Tibial artery (tissue), 4 donors: ENCODE measurements at regions of chr2 and their contacts with region 1.

Region 1: GRCh38 chr2:20188851-20189250 is 36.1 kb downstream of the SDC1 start:
- DNase-seq: no peak
- H3K4me3 ChIP-seq: no peak overlapping the region
- H3K27ac ChIP-seq: no peak overlapping the region
- H3K4me1 ChIP-seq: peaks cover 0 to 7% (median 0%) of the 10 kb centered on the region in 4 donors
- H3K27me3 ChIP-seq: peaks cover 0 to 5% of the 10 kb centered on the region in 2 donors
- CTCF ChIP-seq: no peak

Region 2: GRCh38 chr2:20071397-20072383 is 117.2 kb before region 1 on chr2:
- intact Hi-C with region 1: no loop called
- DNase-seq: peak in 1 of 2 donors; percentile 49
- H3K4me3 ChIP-seq: no peak overlapping the region
- H3K27ac ChIP-seq: peak overlapping the region; percentile 52 to 60
- H3K4me1 ChIP-seq: peaks cover 0 to 14% (median 7%) of the 10 kb centered on the region in 4 donors
- H3K27me3 ChIP-seq: no peaks in the 10 kb centered on the region
- CTCF ChIP-seq: no peak

Region 3: DNA sequence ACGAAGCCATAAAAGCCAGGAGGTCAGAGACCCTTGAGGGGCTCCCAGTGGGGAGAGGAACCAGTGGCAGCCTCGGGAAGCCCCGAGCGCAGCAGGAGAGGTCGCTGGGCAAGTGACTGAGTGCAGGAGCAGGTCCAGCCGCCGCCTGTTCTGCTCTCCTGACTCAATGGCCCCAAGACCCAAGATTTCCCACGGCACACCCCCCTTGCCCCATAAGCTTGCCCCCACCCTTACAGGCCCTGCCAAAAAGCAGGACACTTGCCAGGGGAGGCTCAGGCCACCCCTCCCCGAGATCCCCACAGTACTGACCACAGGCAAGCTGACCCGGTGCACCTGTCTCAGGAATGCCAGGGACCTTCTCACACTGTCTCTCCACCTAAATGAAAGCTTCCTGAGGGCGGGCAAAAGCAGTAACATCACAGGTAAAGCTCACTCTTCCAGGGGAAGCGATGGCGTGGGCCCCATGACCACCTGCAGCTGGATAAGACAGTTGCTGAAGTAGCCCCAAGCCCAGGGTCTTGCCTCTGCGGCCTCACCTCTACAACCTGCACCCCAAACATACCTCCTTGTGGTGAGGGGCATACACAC is 30.2 kb after region 1 on chr2:
- intact Hi-C with region 1: loop called (anchors 1 kb)
- DNase-seq: no peak
- H3K4me3 ChIP-seq: no peak overlapping the region
- H3K27ac ChIP-seq: no peak overlapping the region
- H3K4me1 ChIP-seq: peaks cover 0 to 19% (median 8%) of the 10 kb centered on the region in 4 donors
- H3K27me3 ChIP-seq: peaks cover 0 to 5% of the 10 kb centered on the region in 2 donors
- CTCF ChIP-seq: no peak

Region 4: DNA sequence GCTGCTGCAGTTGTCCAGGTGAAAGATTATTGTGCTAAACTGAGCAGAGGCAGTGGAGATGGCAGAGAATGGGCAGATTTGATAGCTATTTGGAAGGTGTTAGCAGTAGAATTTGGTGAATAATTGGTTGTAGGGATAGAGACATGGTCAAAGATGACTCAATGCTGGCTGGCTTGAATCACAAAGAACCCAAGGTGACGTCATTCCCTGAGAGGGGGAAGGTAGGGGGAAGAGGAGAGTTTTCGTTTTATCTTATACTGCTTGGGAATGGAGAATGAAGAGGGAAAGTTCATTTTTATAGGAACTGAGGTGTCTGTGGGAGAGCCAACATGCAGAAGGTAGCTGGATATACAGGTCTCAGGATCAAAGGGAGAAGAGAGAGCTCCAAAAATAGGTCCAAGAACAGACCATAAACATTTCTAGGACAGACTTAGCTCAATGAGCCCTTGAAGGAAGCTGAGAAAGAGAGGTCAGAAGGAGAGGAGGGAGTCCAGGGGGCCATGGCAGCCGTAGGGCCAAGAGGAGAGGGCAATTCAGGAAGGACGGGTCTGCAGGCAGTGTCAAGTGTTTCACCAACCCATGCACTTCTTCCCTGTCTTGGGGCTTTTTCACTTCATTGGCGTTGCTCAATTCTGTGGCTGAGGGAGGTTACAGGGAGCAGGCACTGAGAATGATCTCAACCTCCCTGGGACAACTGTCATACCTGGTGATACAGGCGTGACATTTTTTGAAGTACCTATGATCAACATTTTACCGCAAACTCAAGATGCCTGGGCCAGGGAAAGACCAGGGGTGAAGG is 1216.2 kb after region 1 on chr2:
- intact Hi-C with region 1: no loop called
- DNase-seq: no peak
- H3K4me3 ChIP-seq: no peak overlapping the region
- H3K27ac ChIP-seq: no peak overlapping the region
- H3K4me1 ChIP-seq: no peaks in the 10 kb centered on the region
- H3K27me3 ChIP-seq: no peaks in the 10 kb centered on the region
- CTCF ChIP-seq: no peak